ENCODE measurements at regions of chr14 and their contacts with region 1.

Region 1: DNA sequence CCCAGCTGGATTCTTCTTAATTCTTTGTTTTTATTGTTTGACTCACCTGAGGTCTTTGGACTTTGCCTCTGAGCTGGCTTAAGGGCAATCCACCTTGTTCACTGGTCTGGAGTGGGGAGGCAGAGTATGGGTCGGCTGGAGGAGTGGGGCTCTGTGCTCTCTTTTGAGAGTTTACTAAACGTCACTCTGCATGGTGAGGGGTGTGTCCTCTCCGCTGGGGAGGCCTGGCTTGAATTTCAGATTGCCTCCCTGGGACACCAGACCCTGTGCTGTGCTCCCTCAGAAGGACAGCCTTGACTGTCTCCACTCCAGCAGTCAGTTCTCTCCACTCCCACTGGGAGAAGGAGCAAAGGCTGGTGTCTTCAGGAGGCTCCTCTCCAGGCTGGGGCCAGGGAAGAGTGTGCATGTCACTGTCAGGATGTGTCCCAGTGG is 1.9 kb upstream of the MTA1 start:
- DNase-seq: no peak
- H3K4me3 ChIP-seq: no peak overlapping the region
- H3K27ac ChIP-seq: no peak overlapping the region
- H3K4me1 ChIP-seq: peaks cover 28% of the 10 kb centered on the region
- CTCF ChIP-seq: no peak

Region 2: GRCh38 chr14:105430535-105430934 is 12.8 kb after region 1 on chr14:
- CTCF ChIA-PET with region 1: no interaction called
- POLR2A ChIA-PET with region 1: interaction called, 11 read pairs
- intact Hi-C with region 1: no loop called
- DNase-seq: no peak
- H3K4me3 ChIP-seq: no peak overlapping the region
- H3K27ac ChIP-seq: no peak overlapping the region
- H3K4me1 ChIP-seq: no peaks in the 10 kb centered on the region
- CTCF ChIP-seq: no peak

Measured in OCI-LY7 (cell line).